A673 (cell line): ENCODE measurements at regions of chr11 and their contacts with region 1.

Region 1: DNA sequence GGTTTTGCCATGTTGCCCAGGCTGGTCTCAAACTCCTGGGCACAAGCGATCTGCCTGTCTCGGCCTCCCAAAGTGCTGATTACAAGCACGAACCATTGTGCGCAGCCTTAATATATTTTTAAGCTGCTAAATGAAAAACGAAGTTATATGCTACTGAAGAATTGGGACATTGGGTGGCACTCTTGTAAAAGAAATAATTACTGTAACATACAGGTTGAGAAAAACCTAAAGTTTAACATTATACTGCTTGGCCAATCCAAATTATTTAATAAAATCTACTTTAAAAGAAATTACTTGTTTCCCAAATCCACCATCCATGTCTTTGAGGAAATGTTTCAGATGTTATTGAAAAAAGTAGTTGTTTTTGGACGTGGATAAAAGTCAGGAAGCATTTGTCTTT is 37.9 kb upstream of the ARHGAP32 start:
- DNase-seq: peak; percentile 54
- H3K4me3 ChIP-seq: no peak overlapping the region
- H3K27ac ChIP-seq: no peak overlapping the region
- H3K4me1 ChIP-seq: no peaks in the 10 kb centered on the region
- H3K27me3 ChIP-seq: no peaks in the 10 kb centered on the region
- CTCF ChIP-seq: peak; percentile 49

Region 2: GRCh38 chr11:129100193-129100592 is 129.8 kb before region 1 on chr11:
- CTCF ChIA-PET with region 1: no interaction called
- POLR2A ChIA-PET with region 1: no interaction called
- intact Hi-C with region 1: no loop called
- DNase-seq: no peak
- H3K4me3 ChIP-seq: no peak overlapping the region
- H3K27ac ChIP-seq: no peak overlapping the region
- H3K4me1 ChIP-seq: no peaks in the 10 kb centered on the region
- H3K27me3 ChIP-seq: no peaks in the 10 kb centered on the region
- CTCF ChIP-seq: no peak

Region 3: GRCh38 chr11:129331871-129332274 is 101.9 kb after region 1 on chr11:
- CTCF ChIA-PET with region 1: interaction called, 6 read pairs
- POLR2A ChIA-PET with region 1: no interaction called
- intact Hi-C with region 1: loop called (anchors 2 kb)
- DNase-seq: peak; percentile 91
- H3K4me3 ChIP-seq: no peak overlapping the region
- H3K27ac ChIP-seq: no peak overlapping the region
- H3K4me1 ChIP-seq: peaks cover 5% of the 10 kb centered on the region
- H3K27me3 ChIP-seq: no peaks in the 10 kb centered on the region
- CTCF ChIP-seq: peak; percentile 99